ENCODE measurements at regions of chr7 and their contacts with region 1.

Region 1: DNA sequence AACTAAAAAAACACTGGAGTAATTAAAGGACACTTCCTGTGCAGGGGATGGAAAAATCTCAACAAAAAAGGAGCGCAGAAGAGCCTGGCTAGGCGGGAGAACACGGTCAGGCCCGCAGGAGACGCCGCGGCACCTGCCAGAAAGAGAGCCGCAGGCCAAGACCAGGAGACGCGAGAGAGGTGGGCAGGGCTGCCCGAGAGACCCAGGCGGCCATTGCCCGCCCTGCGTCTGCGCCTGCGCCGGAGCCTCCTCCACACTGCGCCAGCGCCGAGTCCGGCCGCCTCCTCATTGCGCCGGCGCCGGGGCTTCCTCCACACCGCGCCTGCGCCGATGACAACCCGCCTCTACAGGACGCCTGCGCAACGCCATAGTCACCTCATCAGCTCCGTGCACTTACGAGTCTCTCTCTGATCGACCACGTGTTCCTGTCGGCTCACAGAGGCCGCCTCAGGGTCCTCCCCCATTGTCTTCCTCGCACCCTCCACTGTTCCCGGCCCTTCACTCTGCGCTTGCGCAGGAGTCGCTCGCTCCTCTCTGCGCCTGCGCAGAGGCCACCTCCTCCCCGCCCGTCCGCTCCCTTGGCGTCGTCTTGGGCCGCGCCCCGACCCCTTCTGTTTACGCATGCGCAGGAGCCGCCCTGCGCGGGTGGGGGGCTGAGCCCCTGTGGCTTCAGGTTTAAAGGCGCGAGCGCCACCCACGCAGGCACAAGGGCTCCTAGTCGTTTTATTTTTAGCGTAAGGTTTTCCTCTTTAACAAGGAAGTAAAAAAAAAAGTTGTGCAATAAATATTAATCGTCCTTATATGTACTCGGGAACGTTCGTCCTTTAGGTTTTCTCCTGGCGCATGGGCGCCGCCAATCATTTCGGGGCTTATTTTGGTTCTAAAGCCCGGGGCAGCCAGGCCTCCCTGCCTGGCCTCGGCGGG is 43.2 kb upstream of the FAM20C start:
- DNase-seq: peak; percentile 98
- H3K4me3 ChIP-seq: peak overlapping the region; percentile 38
- H3K4me3 Mint-ChIP-seq: peak overlapping the region; percentile 88
- H3K27ac Mint-ChIP-seq: peak overlapping the region; percentile 99
- H3K4me1 ChIP-seq: peaks cover 15% of the 10 kb centered on the region
- H3K4me1 Mint-ChIP-seq: peaks cover 9% of the 10 kb centered on the region
- H3K27me3 ChIP-seq: no peaks in the 10 kb centered on the region
- H3K27me3 Mint-ChIP-seq: no peaks in the 10 kb centered on the region
- CTCF ChIP-seq: no peak

Region 2: GRCh38 chr7:159370-160270 is 10.4 kb after region 1 on chr7:
- CTCF ChIA-PET with region 1: no interaction called
- POLR2A ChIA-PET with region 1: interaction called, 3 read pairs
- intact Hi-C with region 1: loop called (anchors 1 kb)
- DNase-seq: no peak
- H3K4me3 ChIP-seq: no peak overlapping the region
- H3K4me3 Mint-ChIP-seq: no peak overlapping the region
- H3K27ac Mint-ChIP-seq: no peak overlapping the region
- H3K4me1 ChIP-seq: peaks cover 14% of the 10 kb centered on the region
- H3K4me1 Mint-ChIP-seq: peaks cover 3% of the 10 kb centered on the region
- H3K27me3 ChIP-seq: no peaks in the 10 kb centered on the region
- H3K27me3 Mint-ChIP-seq: no peaks in the 10 kb centered on the region
- CTCF ChIP-seq: no peak

Region 3: GRCh38 chr7:164941-165660 is 15.9 kb after region 1 on chr7:
- CTCF ChIA-PET with region 1: no interaction called
- POLR2A ChIA-PET with region 1: interaction called, 3 read pairs
- intact Hi-C with region 1: loop called (anchors 1 kb)
- DNase-seq: peak; percentile 53 to 77
- H3K4me3 ChIP-seq: no peak overlapping the region
- H3K4me3 Mint-ChIP-seq: peak overlapping the region; percentile 42
- H3K27ac Mint-ChIP-seq: no peak overlapping the region
- H3K4me1 ChIP-seq: peaks cover 34% of the 10 kb centered on the region
- H3K4me1 Mint-ChIP-seq: peaks cover 9% of the 10 kb centered on the region
- H3K27me3 ChIP-seq: no peaks in the 10 kb centered on the region
- H3K27me3 Mint-ChIP-seq: no peaks in the 10 kb centered on the region
- CTCF ChIP-seq: no peak

Region 4: GRCh38 chr7:176786-177432 is 27.7 kb after region 1 on chr7:
- CTCF ChIA-PET with region 1: no interaction called
- POLR2A ChIA-PET with region 1: no interaction called
- intact Hi-C with region 1: no loop called
- DNase-seq: no peak
- H3K4me3 ChIP-seq: no peak overlapping the region
- H3K4me3 Mint-ChIP-seq: no peak overlapping the region
- H3K27ac Mint-ChIP-seq: no peak overlapping the region
- H3K4me1 ChIP-seq: no peaks in the 10 kb centered on the region
- H3K4me1 Mint-ChIP-seq: no peaks in the 10 kb centered on the region
- H3K27me3 ChIP-seq: no peaks in the 10 kb centered on the region
- H3K27me3 Mint-ChIP-seq: peaks cover 11% of the 10 kb centered on the region
- CTCF ChIP-seq: no peak

Region 5: DNA sequence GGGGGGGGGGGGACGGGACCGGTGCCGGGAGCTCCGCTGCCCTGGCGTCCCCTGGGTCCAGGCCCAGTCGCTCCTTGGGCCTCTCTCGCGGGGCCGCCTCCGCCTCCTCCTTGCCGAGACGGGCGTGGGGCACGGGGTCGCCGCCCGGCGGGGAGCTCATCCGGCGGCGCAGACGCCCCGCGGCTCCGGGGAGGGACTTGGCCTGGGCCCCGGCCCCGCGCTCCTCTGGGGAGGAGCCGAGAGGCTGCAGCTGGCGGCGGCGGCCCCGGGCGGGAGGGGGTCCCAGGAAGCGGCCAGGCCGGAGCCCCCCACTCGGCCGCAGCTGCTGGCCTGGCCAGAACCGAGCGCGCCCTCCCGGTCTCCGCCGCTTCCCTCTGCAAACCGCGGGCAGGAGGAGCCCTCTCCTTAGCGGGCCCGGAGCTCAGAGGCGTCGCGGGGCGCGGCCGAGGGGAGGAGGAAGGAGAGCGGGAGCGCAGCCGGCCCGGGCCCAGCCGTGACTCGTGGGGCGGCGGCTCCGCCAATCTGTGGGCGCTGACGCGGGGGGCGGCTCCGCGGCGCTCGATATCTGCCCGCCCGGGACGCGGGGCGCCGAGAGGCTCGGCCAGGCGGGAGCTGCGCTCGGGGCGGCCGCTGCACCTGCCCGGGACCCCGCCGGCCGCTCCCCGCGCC is 42.9 kb after region 1 on chr7 and contains the start of gene FAM20C:
- CTCF ChIA-PET with region 1: no interaction called
- POLR2A ChIA-PET with region 1: interaction called, 8 read pairs
- intact Hi-C with region 1: loop called (anchors 1 kb)
- DNase-seq: peak; percentile 63 to 80
- H3K4me3 ChIP-seq: peak within 1 kb of the TSS; percentile 79
- H3K4me3 Mint-ChIP-seq: peak within 1 kb of the TSS; percentile 77
- H3K27ac Mint-ChIP-seq: no peak within 1 kb of the TSS
- H3K4me1 ChIP-seq: peaks cover 16% of the 10 kb centered on the region
- H3K4me1 Mint-ChIP-seq: peaks cover 16% of the 10 kb centered on the region
- H3K27me3 ChIP-seq: no peaks in the 10 kb centered on the region
- H3K27me3 Mint-ChIP-seq: no peaks in the 10 kb centered on the region
- CTCF ChIP-seq: no peak
- total RNA-seq, gene FAM20C: 34.0 and 37.6 TPM in 2 replicates

Measured in Caco-2 (cell line).